BJ (cell line): ENCODE measurements at regions of chr20 and their contacts with region 1.

Region 1: GRCh38 chr20:35156978-35157377 is 9.8 kb upstream of the EDEM2 start:
- DNase-seq: no peak
- H3K4me3 ChIP-seq: no peak overlapping the region
- H3K27me3 ChIP-seq: peaks cover under 1% of the 10 kb centered on the region; the same call in 1 of the 2 replicates
- CTCF ChIP-seq: no peak

Region 2: DNA sequence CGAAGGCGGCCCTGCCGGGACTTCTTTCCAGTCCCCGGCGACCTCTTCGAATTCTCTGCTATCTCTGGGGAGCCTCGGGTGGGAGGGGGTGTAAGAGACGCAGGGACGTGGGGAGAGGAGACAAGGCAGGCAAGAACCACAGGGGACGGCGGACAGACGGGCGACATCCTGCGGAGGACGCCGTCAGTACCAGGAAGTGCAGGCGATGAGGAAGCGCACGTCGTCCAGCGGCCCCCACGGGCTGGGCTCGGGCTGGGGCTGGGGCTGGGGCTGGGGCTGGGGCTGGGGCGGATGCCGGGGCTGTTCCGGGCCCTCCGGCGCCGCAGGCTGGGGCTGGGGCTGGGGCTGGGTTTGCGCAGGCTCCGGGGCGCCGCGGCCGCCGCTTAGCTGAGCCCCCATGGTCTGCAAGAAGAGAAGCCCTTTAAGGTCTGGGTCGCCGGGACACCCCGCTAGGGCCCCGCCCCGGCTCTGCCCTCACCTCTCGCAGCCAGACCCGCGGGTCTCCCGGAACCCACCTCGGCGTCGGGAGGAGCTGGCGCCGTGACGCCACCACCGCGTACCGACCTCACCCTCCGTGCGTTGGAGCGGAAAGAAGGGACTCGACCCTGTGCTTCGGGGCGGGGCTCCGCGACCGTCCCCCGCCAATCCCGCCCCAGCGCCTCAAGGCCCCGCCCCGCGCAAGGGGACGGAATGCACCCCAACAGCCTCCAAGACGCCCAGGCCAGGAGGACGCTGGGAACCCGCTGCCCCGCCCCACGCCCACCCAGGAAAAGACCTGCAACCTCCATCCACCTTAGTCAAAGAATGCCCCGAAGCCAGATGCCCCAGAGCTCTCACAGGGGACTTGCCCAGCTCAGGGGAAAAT is 120.8 kb after region 1 on chr20 and contains the start of gene MMP24OS:
- CTCF ChIA-PET with region 1: no interaction called
- POLR2A ChIA-PET with region 1: interaction called, 15 read pairs
- DNase-seq: peak; percentile 50
- H3K4me3 ChIP-seq: peak within 1 kb of the TSS; percentile 69
- H3K27me3 ChIP-seq: no peaks in the 10 kb centered on the region
- CTCF ChIP-seq: peak; percentile 64
- polyA plus RNA-seq, gene MMP24OS: 45.4 and 47.6 TPM in 2 replicates